ENCODE measurements at regions of chr18 and their contacts with region 1.

Region 1: DNA sequence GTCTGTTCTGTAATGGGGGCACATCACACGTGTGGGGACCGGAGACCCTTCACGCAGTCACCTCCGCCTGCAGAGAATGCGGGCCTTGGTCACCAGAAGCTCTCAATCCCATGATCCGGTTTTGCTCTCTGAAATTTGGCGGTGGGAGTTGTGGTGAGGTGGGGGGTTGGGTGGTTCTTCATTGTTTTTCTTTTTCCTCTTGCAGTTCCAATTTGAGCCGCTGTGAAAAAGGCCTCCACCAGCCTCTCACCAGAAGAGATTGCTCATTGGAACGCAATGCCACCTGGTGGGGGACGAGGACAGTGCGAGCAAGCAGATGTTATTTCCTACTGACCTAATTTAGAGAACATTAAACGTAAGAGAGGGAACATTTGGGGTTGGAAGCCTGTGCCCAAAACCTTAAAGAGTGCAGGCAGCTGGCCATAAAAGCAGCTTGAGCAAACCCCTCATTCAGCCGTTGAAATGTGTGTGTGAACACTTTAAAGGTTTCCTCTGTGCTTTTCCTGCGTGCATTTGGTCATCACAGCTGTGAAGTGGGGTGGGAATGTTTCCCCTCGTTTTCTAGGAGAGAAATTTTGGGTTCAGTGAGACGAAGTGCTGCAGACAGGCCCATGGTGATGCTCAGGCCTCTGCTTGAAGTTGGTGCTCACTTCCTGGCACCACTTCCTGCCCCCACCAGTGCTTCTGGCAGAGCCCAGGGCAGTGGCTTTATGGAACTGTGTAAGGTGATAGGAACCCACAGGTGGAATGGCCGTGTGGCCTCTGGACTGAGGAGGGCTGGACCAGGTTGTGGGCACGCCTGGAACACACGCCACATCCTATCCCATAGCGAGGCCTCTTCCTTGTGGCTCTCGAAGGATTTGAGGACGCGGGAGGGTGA is 61.7 kb downstream of the ZCCHC2 start:
- DNase-seq: peak; percentile 90
- H3K4me3 Mint-ChIP-seq: no peak overlapping the region
- H3K27ac Mint-ChIP-seq: no peak overlapping the region
- H3K4me1 Mint-ChIP-seq: peaks cover 20% of the 10 kb centered on the region
- H3K27me3 Mint-ChIP-seq: no peaks in the 10 kb centered on the region
- CTCF ChIP-seq: peak; percentile 95

Region 2: DNA sequence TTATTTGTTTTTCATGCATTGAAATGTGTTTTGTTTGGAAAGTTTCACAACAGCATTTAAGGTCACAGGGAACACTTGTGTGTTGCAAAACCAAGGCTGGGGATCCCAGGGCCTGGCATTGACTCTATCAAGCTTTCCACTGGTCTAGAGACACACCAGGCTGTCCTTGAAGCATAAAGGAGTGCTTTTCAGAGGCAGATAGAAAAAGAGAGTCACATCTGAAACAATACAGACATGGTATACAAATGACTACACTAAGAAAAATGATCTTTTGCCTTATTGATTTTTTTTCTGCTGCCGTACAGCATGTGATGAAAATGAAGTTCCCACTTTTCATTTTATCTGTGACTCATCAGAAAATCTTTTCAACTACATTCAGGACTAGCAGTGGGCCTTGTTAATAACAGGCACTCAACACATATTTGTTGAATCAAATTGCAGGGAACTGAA is 123.6 kb before region 1 on chr18:
- CTCF ChIA-PET with region 1: no interaction called
- intact Hi-C with region 1: no loop called
- DNase-seq: no peak
- H3K4me3 Mint-ChIP-seq: no peak overlapping the region
- H3K27ac Mint-ChIP-seq: peak overlapping the region; percentile 46
- H3K4me1 Mint-ChIP-seq: peaks cover 18% of the 10 kb centered on the region
- H3K27me3 Mint-ChIP-seq: no peaks in the 10 kb centered on the region
- CTCF ChIP-seq: no peak

Region 3: DNA sequence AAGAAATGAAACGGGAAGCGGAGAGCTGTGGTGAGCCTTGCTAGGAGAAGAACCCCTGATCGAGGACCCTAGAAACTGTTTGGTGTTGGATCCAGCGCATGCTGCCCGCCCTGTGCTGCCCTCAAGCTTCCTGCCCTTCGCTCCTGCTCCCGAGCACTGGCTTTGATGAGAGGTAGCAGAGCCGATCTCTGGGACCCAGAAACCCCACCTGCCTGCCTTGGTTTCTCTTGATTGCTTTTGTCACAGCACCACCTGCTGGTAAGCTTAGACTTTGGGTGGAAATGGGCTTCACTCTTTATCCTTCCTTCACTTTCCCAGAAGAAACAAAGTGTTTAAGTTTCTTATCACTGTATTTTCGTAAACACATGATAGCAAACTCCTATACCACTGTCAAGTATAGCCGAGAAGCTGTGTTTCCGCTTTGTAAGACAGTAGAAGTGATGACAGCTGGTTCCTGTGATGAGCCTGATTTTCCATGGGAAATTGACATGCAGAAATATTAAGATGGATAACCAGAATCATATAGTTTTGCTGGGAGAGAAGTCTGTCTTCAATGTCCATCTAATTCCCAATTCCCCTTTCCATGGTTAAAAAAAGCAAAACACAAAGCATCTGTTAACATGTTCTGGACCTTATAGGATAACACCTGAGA is 398.2 kb after region 1 on chr18:
- CTCF ChIA-PET with region 1: interaction called, 5 read pairs
- intact Hi-C with region 1: loop called (anchors 1 kb)
- DNase-seq: peak; percentile 74
- H3K4me3 Mint-ChIP-seq: no peak overlapping the region
- H3K27ac Mint-ChIP-seq: peak overlapping the region; percentile 27
- H3K4me1 Mint-ChIP-seq: peaks cover 32% of the 10 kb centered on the region
- H3K27me3 Mint-ChIP-seq: no peaks in the 10 kb centered on the region
- CTCF ChIP-seq: peak; percentile 86

Region 4: DNA sequence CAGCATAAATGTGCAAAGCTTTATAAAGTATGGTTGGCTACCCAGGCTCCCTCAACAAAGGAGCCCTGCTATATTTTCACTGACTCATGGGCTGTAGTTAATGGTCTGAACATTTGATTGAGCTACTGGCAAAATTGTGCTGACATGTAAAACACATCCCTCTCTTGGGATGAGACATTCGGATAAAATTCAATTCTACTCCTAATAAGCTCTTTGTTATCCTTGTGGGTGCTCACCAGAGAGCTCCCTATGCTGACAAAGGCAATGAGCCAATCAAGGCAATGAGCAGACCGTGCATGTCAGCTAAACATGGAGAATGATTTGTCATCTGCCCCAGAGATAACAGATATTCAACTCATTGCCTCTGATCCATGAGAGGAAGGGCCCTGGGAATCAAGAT is 1413.1 kb after region 1 on chr18:
- CTCF ChIA-PET with region 1: no interaction called
- intact Hi-C with region 1: no loop called
- DNase-seq: no peak
- H3K4me3 Mint-ChIP-seq: no peak overlapping the region
- H3K27ac Mint-ChIP-seq: no peak overlapping the region
- H3K4me1 Mint-ChIP-seq: no peaks in the 10 kb centered on the region
- H3K27me3 Mint-ChIP-seq: no peaks in the 10 kb centered on the region
- CTCF ChIP-seq: no peak

Measured in Calu3 (cell line).